AG04449 (cell line): ENCODE measurements at regions of chr9 and their contacts with region 1.

Region 1: DNA sequence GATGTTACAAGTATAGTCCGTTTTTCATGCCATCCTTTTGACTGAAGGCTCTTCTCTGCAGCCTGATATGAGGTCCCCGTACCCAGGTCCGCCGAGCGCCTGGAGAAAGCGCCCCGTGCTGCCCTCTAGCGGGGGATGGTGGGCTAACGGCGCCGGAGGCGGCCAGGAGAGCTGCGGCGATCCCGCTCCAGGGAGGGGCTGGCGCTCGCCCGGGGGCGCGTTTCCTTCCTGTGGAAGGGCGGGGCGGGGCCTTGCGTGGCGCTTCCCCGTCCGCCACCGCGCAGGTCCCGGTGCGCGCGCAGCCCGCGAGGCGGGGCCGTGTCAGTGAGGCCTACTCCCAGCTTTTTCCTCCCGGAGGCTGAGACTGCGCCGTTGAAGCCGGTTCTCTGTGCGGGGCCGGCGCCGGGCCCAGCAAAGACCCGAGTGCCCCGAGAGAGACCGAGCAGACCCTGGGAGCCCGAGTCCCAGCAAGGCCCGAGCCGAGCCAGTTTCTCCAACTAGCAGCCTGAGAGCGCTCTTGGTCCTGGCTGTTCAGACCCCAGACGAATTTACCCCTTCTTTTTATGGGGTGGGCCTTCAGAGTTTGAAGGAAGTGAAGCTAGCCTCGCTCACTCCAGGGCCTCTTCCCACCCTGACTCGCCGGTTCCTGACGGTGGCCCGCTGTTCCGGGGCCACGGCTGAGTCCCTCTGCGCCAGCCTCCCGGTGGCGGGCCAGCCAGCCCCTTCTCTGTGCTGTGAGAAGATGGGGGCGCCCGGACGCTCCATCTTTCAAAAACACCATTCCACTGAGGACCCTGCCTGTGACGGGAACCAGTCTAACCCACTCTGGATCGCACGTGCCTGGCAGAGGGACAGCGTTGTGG is 9.7 kb upstream of the PHF2 start:
- DNase-seq: peak; percentile 50
- H3K4me3 ChIP-seq: peak overlapping the region; percentile 70
- CTCF ChIP-seq: peak; percentile 98

Region 2: GRCh38 chr9:93252781-93253530 is 313.7 kb before region 1 on chr9:
- CTCF ChIA-PET with region 1: no interaction called
- POLR2A ChIA-PET with region 1: no interaction called
- DNase-seq: no peak
- H3K4me3 ChIP-seq: no peak overlapping the region
- CTCF ChIP-seq: no peak

Region 3: DNA sequence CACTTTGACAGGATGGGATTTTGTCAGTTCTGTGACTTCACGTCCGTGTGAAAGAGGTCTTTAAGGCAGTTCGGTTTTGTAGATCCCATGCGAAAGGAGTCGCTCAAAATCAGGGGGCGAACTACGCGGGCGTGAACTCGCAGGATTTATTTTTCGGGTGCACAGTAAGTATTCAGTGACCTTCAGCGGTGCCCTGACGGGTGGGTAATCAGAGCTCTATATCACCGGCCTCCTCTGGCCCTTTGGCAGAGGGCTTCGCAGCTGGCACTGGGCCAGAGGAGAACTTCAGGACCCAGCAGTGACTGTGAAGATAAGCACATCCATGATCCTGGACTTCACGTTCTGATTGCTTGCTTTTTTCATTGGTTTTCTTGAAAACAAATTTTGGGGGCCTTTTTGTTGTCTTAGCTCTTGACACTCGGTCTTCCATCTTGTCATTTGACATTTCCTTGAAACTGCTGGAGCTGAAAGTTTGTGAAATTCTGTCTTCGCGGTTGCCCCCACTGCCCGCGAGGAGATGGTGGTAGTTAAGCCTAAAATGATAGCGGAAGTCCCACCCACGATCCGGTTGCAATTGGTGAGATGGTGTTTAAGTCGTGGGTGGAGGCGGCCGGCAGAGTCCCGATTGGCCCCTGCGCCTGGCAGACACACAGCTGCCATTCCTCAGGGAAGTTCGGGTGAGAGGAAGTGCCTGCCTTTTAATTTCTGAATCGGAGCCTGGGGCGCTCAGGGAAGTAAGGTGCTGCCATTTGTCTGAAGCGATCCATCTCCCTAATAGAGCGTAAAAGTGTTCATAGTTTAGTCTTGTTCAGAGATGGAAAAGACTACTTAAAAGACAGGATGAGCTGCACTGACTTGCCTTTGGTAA is 113.4 kb before region 1 on chr9 and contains the start of gene FAM120AOS:
- CTCF ChIA-PET with region 1: interaction called, 21 read pairs
- POLR2A ChIA-PET with region 1: interaction called, 3 read pairs
- DNase-seq: peak; percentile 76
- H3K4me3 ChIP-seq: peak within 1 kb of the TSS; percentile 84
- CTCF ChIP-seq: no peak

Region 4: GRCh38 chr9:93468763-93469456 is 97.7 kb before region 1 on chr9:
- CTCF ChIA-PET with region 1: interaction called, 12 read pairs
- POLR2A ChIA-PET with region 1: no interaction called
- DNase-seq: no peak
- H3K4me3 ChIP-seq: no peak overlapping the region; the same call in 1 of the 2 replicates
- CTCF ChIP-seq: no peak

Region 5: GRCh38 chr9:93475856-93476255 is 90.8 kb before region 1 on chr9:
- CTCF ChIA-PET with region 1: interaction called, 11 read pairs
- POLR2A ChIA-PET with region 1: no interaction called
- DNase-seq: no peak
- H3K4me3 ChIP-seq: no peak overlapping the region
- CTCF ChIP-seq: no peak

Region 6: DNA sequence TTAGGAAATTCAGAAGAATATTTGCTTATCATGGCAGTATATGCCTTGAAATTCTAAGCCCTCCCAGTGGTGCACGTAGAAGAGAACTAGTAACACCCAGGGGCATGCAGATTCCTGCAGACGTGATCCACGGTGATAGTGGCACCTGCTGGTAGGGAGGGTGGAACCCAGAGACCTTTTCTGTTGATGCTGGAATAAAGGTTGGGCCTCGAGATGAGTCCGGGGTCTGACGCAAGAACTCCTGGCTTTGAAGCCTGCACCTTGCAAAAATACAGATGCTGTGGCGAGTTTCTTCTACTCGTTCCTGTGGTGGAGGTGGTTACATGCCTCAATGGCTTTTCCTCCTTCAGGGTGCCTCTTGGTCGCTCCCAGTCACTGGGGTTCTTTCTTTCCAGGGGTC is 29.8 kb before region 1 on chr9:
- CTCF ChIA-PET with region 1: interaction called, 25 read pairs
- POLR2A ChIA-PET with region 1: no interaction called
- DNase-seq: no peak
- H3K4me3 ChIP-seq: no peak overlapping the region
- CTCF ChIP-seq: no peak

Region 7: GRCh38 chr9:93549611-93550010 is 17.0 kb before region 1 on chr9:
- CTCF ChIA-PET with region 1: interaction called, 94 read pairs
- POLR2A ChIA-PET with region 1: interaction called, 4 read pairs
- DNase-seq: no peak
- H3K4me3 ChIP-seq: no peak overlapping the region
- CTCF ChIP-seq: no peak